BJ (cell line): ENCODE measurements at regions of chr14 and their contacts with region 1.

Region 1: DNA sequence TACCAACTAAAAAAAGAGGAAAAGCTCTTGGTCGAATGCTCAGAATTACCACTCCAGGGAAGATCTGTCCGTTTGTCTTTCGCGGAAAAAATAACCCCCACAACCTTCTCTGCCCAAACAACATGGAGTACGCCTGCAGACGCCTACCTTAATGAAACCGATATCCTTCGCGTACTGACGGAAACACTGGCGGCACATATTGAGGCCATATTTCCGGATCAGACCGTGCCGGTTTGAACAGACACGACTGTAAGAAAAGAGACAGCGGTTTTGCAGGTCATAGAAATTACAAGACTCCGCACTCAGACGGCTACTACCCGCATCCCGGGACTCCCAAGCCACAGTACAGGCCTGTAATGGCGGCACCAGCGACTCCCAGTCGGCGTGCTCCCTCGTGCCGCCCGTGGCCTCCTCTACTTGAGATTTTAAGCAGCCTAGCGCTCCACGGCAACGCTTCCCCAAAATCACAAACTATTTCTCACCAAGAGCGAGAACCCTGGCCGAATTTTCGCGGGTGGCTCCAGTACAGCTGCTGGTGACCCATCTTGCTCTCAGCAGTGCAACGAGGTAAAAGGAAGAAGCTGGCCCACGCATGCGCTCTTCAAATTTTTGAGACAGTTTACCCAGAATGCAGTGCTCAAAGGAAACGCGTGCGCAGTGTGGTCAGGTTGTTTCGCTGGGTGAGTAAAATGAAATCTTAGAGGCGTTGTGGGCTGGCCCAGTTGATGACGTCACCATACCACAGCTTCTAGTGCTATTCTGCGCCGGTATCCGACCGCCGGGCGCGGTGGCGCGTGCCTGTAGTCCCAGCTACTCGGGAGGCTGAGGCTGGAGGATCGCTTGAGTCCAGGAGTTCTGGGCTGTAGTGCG is at the start of gene RPS29:
- DNase-seq: peak; percentile 97
- H3K4me3 ChIP-seq: peak within 1 kb of the TSS; percentile 90
- H3K27me3 ChIP-seq: no peaks in the 10 kb centered on the region
- CTCF ChIP-seq: no peak
- polyA plus RNA-seq, gene RPS29: 3,639 and 4,331 TPM in 2 replicates

Region 2: GRCh38 chr14:49598485-49599300 is 12.7 kb after region 1 on chr14 and contains the start of gene LRR1:
- CTCF ChIA-PET with region 1: interaction called, 19 read pairs
- POLR2A ChIA-PET with region 1: interaction called, 4 read pairs
- DNase-seq: no peak
- H3K4me3 ChIP-seq: peak within 1 kb of the TSS; percentile 96
- H3K27me3 ChIP-seq: no peaks in the 10 kb centered on the region
- CTCF ChIP-seq: no peak
- polyA plus RNA-seq, gene LRR1: 8.6 and 11.9 TPM in 2 replicates